Caco-2 (cell line): ENCODE measurements at regions of chr7 and their contacts with region 1.

Region 1: DNA sequence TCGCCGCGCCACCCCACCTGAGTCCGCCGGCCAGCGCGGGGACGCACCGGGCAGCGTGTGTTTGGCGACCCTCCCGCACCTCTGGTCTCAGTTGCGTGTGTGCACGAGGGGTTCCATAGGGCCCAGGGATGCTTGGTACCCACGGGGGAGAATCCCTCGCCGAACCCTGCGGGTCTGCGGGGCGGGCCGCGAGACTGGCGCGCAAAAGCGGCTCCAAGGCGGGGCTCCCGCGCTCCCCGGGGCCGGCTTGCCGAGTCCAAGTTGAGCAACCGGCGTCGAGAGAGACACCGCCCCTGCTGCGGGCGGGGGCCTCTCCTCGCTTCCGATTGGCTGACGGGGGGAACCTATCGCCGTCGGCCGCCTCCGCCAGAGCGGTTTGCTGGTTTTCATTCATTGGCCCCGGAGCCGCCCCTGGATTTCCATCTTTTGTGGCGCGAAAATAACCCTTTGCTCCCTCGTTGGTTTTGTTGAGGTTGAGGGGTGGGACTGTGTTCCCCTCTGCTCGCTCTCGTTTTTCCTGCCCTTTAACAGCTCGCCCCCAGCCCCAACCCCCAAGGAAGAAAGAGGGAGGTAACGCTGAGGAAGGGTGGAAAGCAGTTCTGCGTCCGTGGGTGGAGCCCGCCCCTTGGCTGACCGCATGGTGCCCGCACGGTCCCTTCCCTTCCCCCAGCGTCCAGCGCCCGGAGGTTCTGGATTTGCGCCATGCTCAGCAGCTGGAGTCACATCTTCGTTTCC is 4.0 kb upstream of the IGF2BP3 start:
- DNase-seq: peak; percentile 98 to 99
- H3K4me3 ChIP-seq: peak overlapping the region; percentile 84
- H3K4me3 Mint-ChIP-seq: peak overlapping the region; percentile 82
- H3K27ac Mint-ChIP-seq: peak overlapping the region; percentile 93
- H3K4me1 ChIP-seq: peaks cover 26% of the 10 kb centered on the region
- H3K4me1 Mint-ChIP-seq: peaks cover 24% of the 10 kb centered on the region
- H3K27me3 ChIP-seq: no peaks in the 10 kb centered on the region
- H3K27me3 Mint-ChIP-seq: no peaks in the 10 kb centered on the region
- CTCF ChIP-seq: no peak

Region 2: DNA sequence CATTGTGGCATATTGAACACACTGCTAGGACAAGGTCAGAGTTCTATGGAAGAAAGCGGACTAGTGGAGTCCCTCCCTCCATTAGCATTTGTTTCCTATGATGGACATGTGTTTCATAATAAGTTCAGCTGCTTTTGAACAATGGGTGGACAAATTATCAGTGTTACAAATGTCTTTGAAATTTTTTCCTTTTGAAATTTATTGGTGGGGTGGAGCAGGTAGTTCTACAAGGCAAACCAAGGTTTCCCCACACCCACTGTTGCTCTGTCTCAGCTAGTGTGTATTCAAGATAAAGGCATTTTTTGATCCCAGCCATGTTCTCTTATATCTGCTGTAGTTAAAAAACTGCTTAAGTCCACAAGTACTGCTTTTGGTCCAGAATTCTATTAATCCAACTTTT is 95.3 kb before region 1 on chr7:
- CTCF ChIA-PET with region 1: no interaction called
- POLR2A ChIA-PET with region 1: no interaction called
- intact Hi-C with region 1: loop called (anchors 1 kb)
- DNase-seq: peak; percentile 65 to 77
- H3K4me3 ChIP-seq: no peak overlapping the region
- H3K4me3 Mint-ChIP-seq: peak overlapping the region; percentile 48
- H3K27ac Mint-ChIP-seq: peak overlapping the region; percentile 51
- H3K4me1 ChIP-seq: peaks cover 73% of the 10 kb centered on the region
- H3K4me1 Mint-ChIP-seq: peaks cover 56% of the 10 kb centered on the region
- H3K27me3 ChIP-seq: no peaks in the 10 kb centered on the region
- H3K27me3 Mint-ChIP-seq: no peaks in the 10 kb centered on the region
- CTCF ChIP-seq: no peak

Region 3: DNA sequence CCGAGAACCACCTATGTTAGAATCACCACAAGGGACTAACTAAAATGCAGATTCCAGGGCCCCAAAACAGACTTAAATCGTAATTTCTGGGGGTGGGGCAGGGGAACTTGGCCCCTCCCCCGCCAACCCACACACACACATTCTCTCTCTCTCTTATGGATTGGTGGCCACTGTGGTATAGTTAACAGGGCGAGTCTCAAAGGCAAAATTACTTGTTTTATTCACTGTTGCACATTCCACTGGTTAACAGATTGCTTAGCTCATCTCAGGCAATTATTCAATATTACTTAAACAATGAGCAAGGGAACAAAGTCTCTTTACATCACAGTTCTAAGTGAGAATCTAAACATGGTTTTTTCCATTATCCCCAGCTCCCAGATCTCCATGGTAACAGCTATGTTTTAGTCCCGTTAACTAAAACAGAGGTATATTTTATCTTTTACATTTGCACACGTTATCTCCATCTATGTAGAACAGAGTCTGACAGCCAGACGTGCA is 42.5 kb before region 1 on chr7:
- CTCF ChIA-PET with region 1: interaction called, 3 read pairs
- POLR2A ChIA-PET with region 1: no interaction called
- intact Hi-C with region 1: loop called (anchors 1 kb)
- DNase-seq: peak in 1 of 2 experiments; percentile 36
- H3K4me3 ChIP-seq: no peak overlapping the region
- H3K4me3 Mint-ChIP-seq: peak overlapping the region; percentile 14
- H3K27ac Mint-ChIP-seq: peak overlapping the region; percentile 79
- H3K4me1 ChIP-seq: peaks cover 19% of the 10 kb centered on the region; the same call in 1 of the 2 replicates
- H3K4me1 Mint-ChIP-seq: peaks cover 36% of the 10 kb centered on the region
- H3K27me3 ChIP-seq: no peaks in the 10 kb centered on the region
- H3K27me3 Mint-ChIP-seq: no peaks in the 10 kb centered on the region
- CTCF ChIP-seq: no peak

Region 4: GRCh38 chr7:23486002-23486775 is 11.9 kb after region 1 on chr7:
- CTCF ChIA-PET with region 1: interaction called, 3 read pairs
- POLR2A ChIA-PET with region 1: interaction called, 4 read pairs
- intact Hi-C with region 1: loop called (anchors 1 kb)
- DNase-seq: peak in 1 of 2 experiments; percentile 30
- H3K4me3 ChIP-seq: no peak overlapping the region
- H3K4me3 Mint-ChIP-seq: peak overlapping the region; percentile 62
- H3K27ac Mint-ChIP-seq: peak overlapping the region; percentile 78
- H3K4me1 ChIP-seq: peaks cover 20% of the 10 kb centered on the region
- H3K4me1 Mint-ChIP-seq: peaks cover 24% of the 10 kb centered on the region
- H3K27me3 ChIP-seq: no peaks in the 10 kb centered on the region
- H3K27me3 Mint-ChIP-seq: no peaks in the 10 kb centered on the region
- CTCF ChIP-seq: no peak

Region 5: GRCh38 chr7:23531794-23532489 is 57.7 kb after region 1 on chr7 and contains the start of gene TRA2A:
- CTCF ChIA-PET with region 1: no interaction called
- POLR2A ChIA-PET with region 1: interaction called, 4 read pairs
- intact Hi-C with region 1: loop called (anchors 1 kb)
- DNase-seq: peak; percentile 97
- H3K4me3 ChIP-seq: peak within 1 kb of the TSS; percentile 99
- H3K4me3 Mint-ChIP-seq: peak within 1 kb of the TSS; percentile 91
- H3K27ac Mint-ChIP-seq: peak within 1 kb of the TSS; percentile 99
- H3K4me1 ChIP-seq: peaks cover 19% of the 10 kb centered on the region
- H3K4me1 Mint-ChIP-seq: peaks cover 16% of the 10 kb centered on the region
- H3K27me3 ChIP-seq: no peaks in the 10 kb centered on the region
- H3K27me3 Mint-ChIP-seq: no peaks in the 10 kb centered on the region
- CTCF ChIP-seq: no peak
- total RNA-seq, gene TRA2A: 123 and 132 TPM in 2 replicates

Region 6: GRCh38 chr7:23679898-23680413 is 205.7 kb after region 1 on chr7 and contains the start of gene FAM221A:
- CTCF ChIA-PET with region 1: no interaction called
- POLR2A ChIA-PET with region 1: no interaction called
- intact Hi-C with region 1: loop called (anchors 1 kb)
- DNase-seq: peak; percentile 91 to 93
- H3K4me3 ChIP-seq: peak within 1 kb of the TSS; percentile 66
- H3K4me3 Mint-ChIP-seq: peak within 1 kb of the TSS; percentile 87
- H3K27ac Mint-ChIP-seq: peak within 1 kb of the TSS; percentile 65
- H3K4me1 ChIP-seq: peaks cover 5% of the 10 kb centered on the region
- H3K4me1 Mint-ChIP-seq: no peaks in the 10 kb centered on the region
- H3K27me3 ChIP-seq: no peaks in the 10 kb centered on the region
- H3K27me3 Mint-ChIP-seq: no peaks in the 10 kb centered on the region
- CTCF ChIP-seq: peak; percentile 64 to 80
- total RNA-seq, gene FAM221A: 13.2 and 19.1 TPM in 2 replicates